Endothelial cell of umbilical vein (primary cell): ENCODE measurements at regions of chr3 and their contacts with region 1.

Region 1: DNA sequence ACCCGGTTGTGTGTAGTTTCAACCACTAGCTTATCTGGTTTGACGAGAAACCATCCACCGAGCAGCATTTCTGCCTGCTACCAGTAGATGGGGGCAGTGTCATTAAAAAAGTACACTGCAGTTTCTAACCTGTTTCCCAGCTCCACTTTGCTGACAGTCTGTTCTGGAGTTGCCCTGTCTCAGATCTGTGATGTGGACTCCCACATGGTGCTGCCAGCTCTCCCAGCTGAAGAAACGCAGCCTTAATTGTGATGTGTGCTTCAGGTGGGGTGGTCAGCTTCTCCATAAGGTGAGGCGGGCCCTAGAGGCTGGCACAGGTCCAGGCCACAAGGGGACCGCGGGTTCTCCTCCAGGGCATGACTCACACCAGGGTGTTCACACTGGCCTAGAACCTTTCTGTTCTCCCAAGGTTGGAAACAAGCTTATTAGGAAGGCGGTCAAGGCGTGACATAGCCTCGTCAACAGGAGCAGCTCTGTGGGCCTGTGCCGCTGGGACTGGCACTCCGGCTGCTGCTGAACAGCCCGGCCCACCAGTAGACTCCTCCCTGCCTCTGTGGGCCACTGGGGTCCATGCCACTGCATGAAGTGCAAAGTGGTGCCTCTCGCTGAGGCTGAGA is 2.9 kb upstream of the FAM43A start:
- DNase-seq: peak; percentile 89
- H3K4me3 ChIP-seq: no peak overlapping the region
- H3K27ac ChIP-seq: peak overlapping the region; percentile 46
- H3K4me1 ChIP-seq: peaks cover 18% of the 10 kb centered on the region
- H3K27me3 ChIP-seq: no peaks in the 10 kb centered on the region
- CTCF ChIP-seq: peak; percentile 83 to 89
- POLR2A ChIP-seq: no peak

Region 2: GRCh38 chr3:194640829-194641228 is 42.0 kb before region 1 on chr3:
- CTCF ChIA-PET with region 1: interaction called, 13 read pairs
- POLR2A ChIA-PET with region 1: interaction called, 4 read pairs
- dilution Hi-C with region 1: no loop called
- intact Hi-C with region 1: no loop called
- DNase-seq: peak; percentile 79
- H3K4me3 ChIP-seq: peak overlapping the region in 1 of 3 experiments; percentile 14
- H3K27ac ChIP-seq: peak overlapping the region; percentile 91
- H3K4me1 ChIP-seq: peaks cover 35% of the 10 kb centered on the region
- H3K27me3 ChIP-seq: no peaks in the 10 kb centered on the region
- CTCF ChIP-seq: peak; percentile 49 to 61
- POLR2A ChIP-seq: no peak

Region 3: GRCh38 chr3:194852825-194853537 is 170.2 kb after region 1 on chr3:
- CTCF ChIA-PET with region 1: no interaction called
- POLR2A ChIA-PET with region 1: no interaction called
- dilution Hi-C with region 1: no loop called
- intact Hi-C with region 1: no loop called
- DNase-seq: no peak
- H3K4me3 ChIP-seq: no peak overlapping the region
- H3K27ac ChIP-seq: no peak overlapping the region
- H3K4me1 ChIP-seq: no peaks in the 10 kb centered on the region
- H3K27me3 ChIP-seq: no peaks in the 10 kb centered on the region
- CTCF ChIP-seq: no peak
- POLR2A ChIP-seq: no peak

Region 4: DNA sequence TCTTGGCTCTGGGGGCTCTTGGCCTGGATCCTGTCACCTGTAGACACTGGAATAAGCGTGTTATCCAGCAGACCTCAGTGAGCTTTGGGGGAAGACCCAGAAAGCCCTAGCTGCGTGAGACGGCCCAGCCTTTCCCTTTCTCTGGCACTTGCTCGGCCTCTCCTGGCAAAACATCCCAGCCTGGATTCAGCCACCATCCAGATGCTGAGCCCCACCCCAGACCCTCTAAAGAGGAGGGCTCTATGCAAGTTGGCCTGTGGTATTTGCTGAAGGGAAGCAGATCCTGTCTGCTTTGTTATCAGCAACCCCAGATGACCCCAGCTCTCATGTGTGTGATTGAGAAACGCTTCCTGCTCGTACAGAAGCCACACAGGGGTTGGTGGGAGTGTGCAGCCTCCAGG is 270.0 kb after region 1 on chr3:
- CTCF ChIA-PET with region 1: interaction called, 6 read pairs
- POLR2A ChIA-PET with region 1: no interaction called
- dilution Hi-C with region 1: no loop called
- intact Hi-C with region 1: loop called (anchors 1 kb)
- DNase-seq: peak; percentile 21
- H3K4me3 ChIP-seq: no peak overlapping the region
- H3K27ac ChIP-seq: no peak overlapping the region
- H3K4me1 ChIP-seq: peaks cover 6% of the 10 kb centered on the region
- H3K27me3 ChIP-seq: no peaks in the 10 kb centered on the region
- CTCF ChIP-seq: no peak
- POLR2A ChIP-seq: no peak

Region 5: DNA sequence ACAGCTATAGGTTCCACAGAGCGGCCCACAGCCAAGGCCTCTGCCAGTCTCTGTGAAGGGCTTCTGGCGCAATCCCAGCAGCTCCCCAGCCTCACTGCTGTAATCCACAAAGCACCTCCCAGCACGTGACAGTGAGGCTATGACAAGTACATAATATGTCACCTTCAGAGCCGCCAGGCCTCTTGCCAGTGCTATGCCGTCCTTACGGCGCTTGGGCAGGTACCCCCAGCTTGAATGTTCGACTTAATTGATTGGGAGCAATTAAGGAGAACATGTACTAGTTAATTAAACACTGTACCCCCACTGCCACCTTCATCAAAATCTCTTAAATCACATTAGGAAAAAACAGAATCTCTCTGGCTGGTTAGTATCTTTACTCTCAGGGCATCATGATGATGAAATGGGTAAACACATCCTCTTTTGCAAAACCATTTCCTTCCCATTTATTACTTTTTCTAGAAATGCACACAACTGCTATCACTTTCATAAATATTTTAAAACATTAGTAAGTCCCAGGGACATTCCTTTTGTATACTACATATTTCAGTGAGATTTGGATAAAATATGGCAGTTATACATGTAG is 418.3 kb after region 1 on chr3:
- CTCF ChIA-PET with region 1: interaction called, 66 read pairs
- POLR2A ChIA-PET with region 1: no interaction called
- dilution Hi-C with region 1: loop called (anchors 25 kb)
- intact Hi-C with region 1: loop called (anchors 1 kb)
- DNase-seq: peak; percentile 53
- H3K4me3 ChIP-seq: no peak overlapping the region
- H3K27ac ChIP-seq: peak overlapping the region; percentile 27
- H3K4me1 ChIP-seq: peaks cover 57% of the 10 kb centered on the region
- H3K27me3 ChIP-seq: no peaks in the 10 kb centered on the region
- CTCF ChIP-seq: no peak
- POLR2A ChIP-seq: no peak

Region 6: GRCh38 chr3:195154793-195155535 is 472.2 kb after region 1 on chr3:
- CTCF ChIA-PET with region 1: interaction called, 24 read pairs
- POLR2A ChIA-PET with region 1: interaction called, 14 read pairs
- dilution Hi-C with region 1: no loop called
- intact Hi-C with region 1: loop called (anchors 1 kb)
- DNase-seq: peak; percentile 100
- H3K4me3 ChIP-seq: no peak overlapping the region
- H3K27ac ChIP-seq: peak overlapping the region; percentile 95
- H3K4me1 ChIP-seq: peaks cover 86% of the 10 kb centered on the region
- H3K27me3 ChIP-seq: no peaks in the 10 kb centered on the region
- CTCF ChIP-seq: no peak
- POLR2A ChIP-seq: peak; percentile 80

Region 7: DNA sequence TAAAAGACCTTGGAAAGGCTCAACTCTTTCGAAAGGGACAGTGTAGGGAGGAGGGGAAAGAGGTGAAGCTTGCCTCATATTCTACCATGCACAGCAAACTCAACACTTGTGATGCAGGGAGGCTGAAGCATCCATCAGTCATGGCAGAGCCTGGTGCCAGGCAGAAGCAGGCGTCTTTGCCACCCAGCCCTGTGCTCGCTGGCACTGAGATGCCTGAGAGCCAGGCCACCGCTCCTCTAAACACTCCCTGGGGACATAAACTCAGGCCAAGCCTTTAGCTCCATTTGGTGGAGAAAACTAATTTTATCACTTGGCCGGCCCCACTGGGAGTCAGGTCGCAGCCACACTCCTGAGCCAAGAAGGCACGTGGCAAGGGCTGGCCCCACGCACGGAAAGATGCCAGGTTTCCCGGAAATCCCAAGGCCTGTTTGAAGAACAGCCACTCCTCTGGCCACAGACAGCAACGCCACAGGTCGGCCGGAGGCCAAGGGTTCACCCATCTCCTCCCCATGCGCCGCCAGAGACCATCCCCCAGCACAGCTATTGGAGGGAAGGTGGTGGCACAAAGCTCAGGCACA is 557.5 kb after region 1 on chr3:
- CTCF ChIA-PET with region 1: interaction called, 7 read pairs
- POLR2A ChIA-PET with region 1: no interaction called
- dilution Hi-C with region 1: loop called (anchors 10 kb)
- intact Hi-C with region 1: no loop called
- DNase-seq: no peak
- H3K4me3 ChIP-seq: no peak overlapping the region
- H3K27ac ChIP-seq: no peak overlapping the region
- H3K4me1 ChIP-seq: peaks cover 8% of the 10 kb centered on the region
- H3K27me3 ChIP-seq: no peaks in the 10 kb centered on the region
- CTCF ChIP-seq: no peak
- POLR2A ChIP-seq: no peak